HCT116 (cell line): ENCODE measurements at regions of chr12 and their contacts with region 1.

Region 1: GRCh38 chr12:34151019-34151418 is 128.7 kb downstream of the ALG10 start:
- DNase-seq: no peak
- ATAC-seq: no peak
- H3K4me3 ChIP-seq: no peak overlapping the region
- H3K27ac ChIP-seq: no peak overlapping the region
- H3K4me1 ChIP-seq: no peaks in the 10 kb centered on the region
- H3K27me3 ChIP-seq: no peaks in the 10 kb centered on the region
- CTCF ChIP-seq: no peak
- POLR2A ChIP-seq: no peak
- RAD21 ChIP-seq: no peak

Region 2: DNA sequence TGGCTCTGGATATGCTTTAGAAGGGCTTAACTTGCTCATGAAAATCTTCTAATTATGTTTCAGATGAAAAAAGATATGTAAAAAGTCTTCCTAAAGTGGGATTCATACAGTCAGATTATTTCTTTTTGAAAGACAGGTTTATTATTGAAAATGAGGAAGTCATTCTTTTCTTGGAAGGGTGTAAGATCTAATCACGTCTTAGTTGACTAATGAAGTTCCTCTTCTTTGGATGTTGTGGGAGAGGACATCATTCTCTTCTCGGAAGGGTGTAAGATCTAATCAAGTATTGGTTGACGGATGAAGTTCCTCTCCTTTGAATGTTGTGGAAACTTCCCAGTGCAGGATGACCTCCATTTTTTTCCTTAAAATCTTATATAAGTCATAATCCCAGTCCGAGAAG is 53.8 kb before region 1 on chr12:
- CTCF ChIA-PET with region 1: no interaction called
- POLR2A ChIA-PET with region 1: no interaction called
- RAD21 ChIA-PET with region 1: no interaction called
- intact Hi-C with region 1: loop called (anchors 10 kb)
- DNase-seq: no peak
- ATAC-seq: no peak
- H3K4me3 ChIP-seq: no peak overlapping the region
- H3K27ac ChIP-seq: no peak overlapping the region
- H3K4me1 ChIP-seq: no peaks in the 10 kb centered on the region
- H3K27me3 ChIP-seq: peaks cover 5% of the 10 kb centered on the region; the same call in 1 of the 2 replicates
- CTCF ChIP-seq: no peak
- POLR2A ChIP-seq: no peak
- RAD21 ChIP-seq: no peak

Region 3: GRCh38 chr12:34163431-34163830 is 12.4 kb after region 1 on chr12:
- CTCF ChIA-PET with region 1: no interaction called
- POLR2A ChIA-PET with region 1: no interaction called
- RAD21 ChIA-PET with region 1: no interaction called
- intact Hi-C with region 1: no loop called
- DNase-seq: no peak
- ATAC-seq: no peak
- H3K4me3 ChIP-seq: no peak overlapping the region
- H3K27ac ChIP-seq: no peak overlapping the region
- H3K4me1 ChIP-seq: no peaks in the 10 kb centered on the region
- H3K27me3 ChIP-seq: 0 out of 2 replicates have a peak, but pooled peaks cover 4% of the 10 kb centered on the region
- CTCF ChIP-seq: no peak
- POLR2A ChIP-seq: no peak
- RAD21 ChIP-seq: no peak

Region 4: DNA sequence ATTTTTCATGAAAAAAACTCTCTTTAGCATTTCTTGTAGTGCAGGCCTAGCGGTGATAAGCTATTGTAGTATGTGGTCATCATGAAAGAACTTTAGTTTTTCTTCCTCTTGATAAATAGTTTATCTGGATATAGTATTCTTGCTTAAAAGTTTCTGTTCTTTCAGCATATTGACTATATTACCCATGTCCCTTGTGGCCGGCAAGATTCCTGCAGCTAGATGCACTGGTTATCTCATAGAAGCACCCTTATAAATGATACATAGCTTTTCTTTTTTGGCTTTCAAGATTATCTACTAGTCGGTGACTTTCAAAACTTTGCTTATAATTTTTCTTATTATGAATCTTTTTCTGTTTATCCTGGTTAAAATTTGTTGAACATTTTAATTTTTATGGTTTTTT is 106.1 kb after region 1 on chr12:
- CTCF ChIA-PET with region 1: no interaction called
- POLR2A ChIA-PET with region 1: no interaction called
- RAD21 ChIA-PET with region 1: no interaction called
- intact Hi-C with region 1: loop called (anchors 10 kb)
- DNase-seq: no peak
- ATAC-seq: no peak
- H3K4me3 ChIP-seq: no peak overlapping the region
- H3K27ac ChIP-seq: no peak overlapping the region
- H3K4me1 ChIP-seq: no peaks in the 10 kb centered on the region
- H3K27me3 ChIP-seq: no peaks in the 10 kb centered on the region
- CTCF ChIP-seq: peak in 2 of 3 experiments; percentile 20 to 27; a peak in 1 of 6 replicates
- POLR2A ChIP-seq: no peak
- RAD21 ChIP-seq: no peak

Region 5: GRCh38 chr12:34606749-34607519 is 455.9 kb after region 1 on chr12:
- CTCF ChIA-PET with region 1: no interaction called
- POLR2A ChIA-PET with region 1: no interaction called
- RAD21 ChIA-PET with region 1: no interaction called
- intact Hi-C with region 1: no loop called
- DNase-seq: no peak
- ATAC-seq: no peak
- H3K4me3 ChIP-seq: no peak overlapping the region
- H3K27ac ChIP-seq: no peak overlapping the region
- H3K4me1 ChIP-seq: no peaks in the 10 kb centered on the region
- H3K27me3 ChIP-seq: no peaks in the 10 kb centered on the region
- CTCF ChIP-seq: no peak
- POLR2A ChIP-seq: no peak
- RAD21 ChIP-seq: no peak